AG04449 (cell line): ENCODE measurements at regions of chr18 and their contacts with region 1.

Region 1: GRCh38 chr18:48445540-48445939 is 36.4 kb upstream of the ZBTB7C start:
- DNase-seq: no peak
- H3K4me3 ChIP-seq: no peak overlapping the region
- CTCF ChIP-seq: peak; percentile 95

Region 2: DNA sequence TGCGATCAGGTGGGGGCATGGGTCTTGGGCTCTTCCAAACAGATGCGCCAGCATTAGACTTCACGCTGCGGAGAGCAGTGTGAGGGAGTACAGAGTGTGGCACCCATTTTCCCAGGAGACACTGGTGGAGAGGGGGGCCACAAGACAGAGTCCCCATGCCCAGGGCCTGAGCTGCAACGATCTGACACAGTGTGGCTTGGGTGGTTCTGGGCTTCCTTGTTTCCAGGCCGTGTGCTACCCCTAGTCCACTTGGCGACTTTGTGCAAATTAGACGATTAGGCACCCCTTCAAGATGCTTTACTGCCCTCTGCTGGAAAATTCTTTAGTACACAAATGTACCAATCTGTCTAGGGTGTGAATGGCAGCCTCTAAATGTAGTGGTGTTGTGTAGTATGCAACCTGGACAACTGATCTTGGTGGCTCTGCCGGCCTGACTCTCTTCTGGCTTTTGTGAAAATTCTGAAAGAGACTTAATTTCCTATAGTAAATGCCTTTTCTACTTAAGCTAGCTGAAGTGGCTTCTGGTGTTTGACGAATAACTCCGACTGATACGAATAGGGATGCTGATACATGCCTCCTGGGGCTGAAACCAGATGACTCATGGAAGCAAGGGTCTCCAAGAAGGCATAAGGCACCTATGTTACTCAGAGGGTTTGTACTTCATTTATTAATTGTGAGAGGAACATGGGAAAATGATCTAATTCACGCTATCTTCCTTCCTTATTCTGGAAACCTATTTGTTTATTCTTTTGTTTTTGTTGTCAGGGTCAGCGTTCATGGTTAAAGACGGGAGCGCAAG is 422.8 kb before region 1 on chr18:
- CTCF ChIA-PET with region 1: interaction called, 81 read pairs
- POLR2A ChIA-PET with region 1: no interaction called
- DNase-seq: no peak
- H3K4me3 ChIP-seq: no peak overlapping the region
- CTCF ChIP-seq: peak; percentile 53

Region 3: GRCh38 chr18:48036641-48037421 is 408.7 kb before region 1 on chr18:
- CTCF ChIA-PET with region 1: interaction called, 81 read pairs
- POLR2A ChIA-PET with region 1: no interaction called
- DNase-seq: no peak
- H3K4me3 ChIP-seq: no peak overlapping the region
- CTCF ChIP-seq: no peak

Region 4: DNA sequence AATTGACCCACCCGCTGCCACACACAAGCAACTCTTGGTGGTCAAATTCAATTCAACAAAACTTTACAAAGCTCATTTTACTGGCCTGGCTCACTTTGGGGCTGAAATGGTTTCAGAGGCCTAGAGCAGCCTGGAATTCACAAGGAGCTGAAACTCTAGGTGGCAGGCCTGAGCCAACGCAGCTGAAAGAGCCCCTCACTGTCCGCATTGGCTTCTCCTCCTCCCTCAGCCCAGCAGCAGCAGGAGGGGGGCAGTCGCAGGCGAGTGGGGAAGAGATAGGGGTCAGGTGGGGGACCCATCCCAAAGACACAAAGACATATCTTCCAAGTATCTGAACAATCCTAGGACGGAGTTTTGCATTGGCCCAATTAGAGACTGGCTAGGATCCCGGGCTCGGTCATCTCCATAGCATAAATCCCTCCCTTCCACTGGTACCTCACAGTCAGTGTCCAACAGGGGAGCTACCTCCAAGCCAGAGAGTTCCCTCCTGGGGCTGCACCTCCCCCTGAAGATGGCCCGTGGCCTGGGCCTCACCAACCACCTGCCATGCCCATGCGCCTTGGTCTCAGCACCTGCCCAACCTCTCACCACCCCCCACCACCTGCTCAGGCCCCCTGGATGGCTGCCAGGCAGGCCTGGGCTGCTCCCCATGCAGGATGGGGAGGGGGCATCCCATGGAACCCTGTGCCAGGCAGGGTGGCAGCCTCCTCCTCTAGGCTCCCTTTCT is 149.8 kb before region 1 on chr18:
- CTCF ChIA-PET with region 1: interaction called, 14 read pairs
- POLR2A ChIA-PET with region 1: no interaction called
- DNase-seq: no peak
- H3K4me3 ChIP-seq: no peak overlapping the region
- CTCF ChIP-seq: peak; percentile 44

Region 5: DNA sequence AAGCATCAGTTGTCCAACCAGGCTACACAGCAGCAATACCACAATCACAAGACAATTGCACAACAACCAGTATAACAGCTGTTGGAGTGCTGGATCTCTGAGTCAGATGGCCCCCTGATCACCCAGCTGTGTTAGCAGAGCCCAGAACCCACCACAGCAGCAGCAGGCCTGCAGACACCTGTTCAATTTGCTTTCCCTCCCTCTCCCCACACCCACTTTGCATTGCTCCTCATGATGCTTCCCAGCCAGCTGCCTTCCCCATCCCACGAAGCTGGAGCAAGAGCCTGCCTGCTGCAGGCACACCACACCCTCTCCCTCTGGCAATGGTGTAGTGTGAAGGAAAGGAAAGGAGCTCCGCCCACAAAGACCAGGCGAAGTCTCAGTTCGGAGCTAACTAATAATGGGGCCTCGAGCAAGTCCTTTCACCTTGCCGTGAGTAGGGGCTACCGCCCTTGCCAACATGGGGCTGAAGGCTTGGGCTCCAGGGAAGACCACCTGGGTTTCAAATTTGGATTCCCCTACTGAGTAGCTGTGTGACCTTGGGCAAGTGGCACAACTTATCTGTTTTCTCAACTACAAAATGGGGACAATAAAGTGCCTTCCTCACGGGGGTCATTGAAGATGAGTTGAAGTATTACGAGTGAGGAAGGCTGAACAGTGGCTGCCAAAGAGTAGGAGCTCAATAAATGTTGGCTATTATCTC is 16.9 kb before region 1 on chr18:
- CTCF ChIA-PET with region 1: interaction called, 59 read pairs
- POLR2A ChIA-PET with region 1: no interaction called
- DNase-seq: no peak
- H3K4me3 ChIP-seq: no peak overlapping the region
- CTCF ChIP-seq: no peak

Region 6: GRCh38 chr18:48470484-48471180 is 25.1 kb after region 1 on chr18:
- CTCF ChIA-PET with region 1: interaction called, 227 read pairs
- POLR2A ChIA-PET with region 1: no interaction called
- DNase-seq: no peak
- H3K4me3 ChIP-seq: no peak overlapping the region
- CTCF ChIP-seq: no peak